ENCODE measurements at regions of chr10 and their contacts with region 1.

Region 1: DNA sequence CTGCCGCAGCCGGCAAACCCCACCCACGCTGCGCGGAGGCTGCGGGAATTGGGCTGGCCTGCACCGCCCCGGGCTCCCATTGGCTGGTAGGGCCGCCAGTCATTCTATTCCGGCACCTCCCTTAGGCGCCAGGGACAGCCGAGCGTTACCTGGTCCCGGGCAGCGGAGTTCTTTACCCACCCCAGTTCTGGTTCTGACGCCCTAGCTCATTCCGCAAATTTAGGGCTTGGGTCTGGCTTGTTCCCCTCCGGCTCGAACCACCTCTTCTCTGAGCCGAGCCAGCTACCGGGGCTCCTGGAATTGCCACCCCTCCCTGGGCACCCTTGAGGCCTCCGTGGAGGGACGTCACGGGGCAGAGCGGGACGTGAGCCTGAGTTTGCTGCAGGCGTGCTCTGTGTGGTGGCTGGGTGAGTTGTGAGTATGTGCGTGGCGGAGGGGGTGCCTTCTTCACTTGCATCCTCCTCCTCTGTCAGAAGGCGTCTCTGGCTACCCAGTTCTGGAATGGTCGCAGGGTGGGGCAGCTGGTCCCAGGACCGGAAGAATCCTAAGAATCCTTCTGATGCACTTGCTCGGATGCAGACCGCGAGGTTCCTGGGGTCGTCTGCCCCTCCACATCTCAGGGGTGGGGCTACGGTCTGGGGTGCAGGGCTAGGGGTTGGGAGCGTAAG is at the starts of genes PDZD7 and SFXN3:
- DNase-seq: peak; percentile 89 to 98 (median 96)
- ATAC-seq: peak; percentile 80 to 83
- H3K4me3 Mint-ChIP-seq: peak within 1 kb of the TSS; percentile 86 to 99 (median 93)
- H3K27ac Mint-ChIP-seq: peak within 1 kb of the TSS; percentile 81 to 99 (median 97)
- H3K4me1 Mint-ChIP-seq: peaks cover 15 to 26% (median 19%) of the 10 kb centered on the region in 4 donors
- H3K27me3 Mint-ChIP-seq: peaks cover 0 to 3% (median 0%) of the 10 kb centered on the region in 5 donors
- polyA plus RNA-seq, gene PDZD7: 0.39 to 1.1 (median 0.89) TPM
- polyA plus RNA-seq, gene SFXN3: 9.9 to 11.5 (median 11.2) TPM

Region 2: GRCh38 chr10:101018600-101019439 is 12.4 kb before region 1 on chr10:
- POLR2A ChIA-PET with region 1: interaction called, 15 read pairs
- DNase-seq: peak; percentile 40 to 84 (median 56)
- ATAC-seq: peak; percentile 84 to 87
- H3K4me3 Mint-ChIP-seq: peak overlapping the region in 2 of 10 donors; percentile 5 to 24
- H3K27ac Mint-ChIP-seq: peak overlapping the region in 1 of 10 donors; percentile 43
- H3K4me1 Mint-ChIP-seq: peaks cover 7 to 14% (median 11%) of the 10 kb centered on the region in 4 donors
- H3K27me3 Mint-ChIP-seq: peaks cover 8 to 82% (median 49%) of the 10 kb centered on the region in 5 donors